HepG2 (cell line): ENCODE measurements at regions of chr5 and their contacts with region 1.

Region 1: GRCh38 chr5:142145106-142145900 is 36.7 kb downstream of the NDFIP1 start:
- DNase-seq: peak; percentile 44
- ATAC-seq: peak; percentile 92
- H3K4me3 ChIP-seq: no peak overlapping the region
- H3K27ac ChIP-seq: no peak overlapping the region
- H3K4me1 ChIP-seq: no peaks in the 10 kb centered on the region
- H3K27me3 ChIP-seq: no peaks in the 10 kb centered on the region
- CTCF ChIP-seq: peak; percentile 72
- EP300 ChIP-seq: no peak
- POLR2A ChIP-seq: no peak
- RAD21 ChIP-seq: 0 out of 2 replicates have a peak, but pooled peaks have one; percentile 34

Region 2: DNA sequence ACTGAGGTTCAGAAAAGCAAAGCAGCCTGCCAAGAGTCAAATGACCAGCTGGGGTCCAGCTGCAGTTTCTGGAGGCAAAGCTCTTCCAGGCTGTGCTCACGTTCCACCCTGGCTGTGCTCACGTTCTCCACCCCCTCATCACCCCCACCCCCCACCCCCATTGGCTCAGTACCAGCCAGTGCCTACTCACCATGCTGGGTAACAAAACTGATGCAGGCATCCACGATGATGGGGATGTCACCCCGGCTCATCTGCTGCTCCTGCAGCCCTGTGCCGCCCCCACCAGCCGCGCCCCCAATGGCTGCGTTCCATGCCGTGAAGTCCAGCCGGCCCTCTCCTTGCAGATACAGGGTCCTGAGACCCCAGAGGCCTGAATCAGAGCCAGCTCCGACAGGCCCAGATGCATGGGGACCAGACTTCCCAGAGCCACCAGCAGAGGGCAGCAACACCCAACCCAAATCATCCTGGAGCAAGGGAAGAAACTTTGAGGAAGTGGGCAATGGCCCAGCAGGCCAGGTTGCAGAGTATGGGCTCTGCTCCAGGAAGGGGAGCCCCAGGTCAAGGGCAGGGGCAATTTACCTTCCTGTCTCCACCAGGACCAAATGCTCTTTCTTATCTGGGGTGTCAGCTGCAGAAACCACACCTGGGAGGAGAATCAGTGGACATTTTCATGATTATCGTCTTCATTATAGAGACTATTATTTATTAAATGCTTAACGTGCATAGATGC is 480.4 kb before region 1 on chr5:
- CTCF ChIA-PET with region 1: no interaction called
- POLR2A ChIA-PET with region 1: no interaction called
- in situ Hi-C with region 1: no loop called
- intact Hi-C with region 1: loop called (anchors 10 kb)
- DNase-seq: peak; percentile 56
- ATAC-seq: peak; percentile 90
- H3K4me3 ChIP-seq: no peak overlapping the region
- H3K27ac ChIP-seq: no peak overlapping the region
- H3K4me1 ChIP-seq: 0 out of 2 replicates have a peak, but pooled peaks cover 4% of the 10 kb centered on the region
- H3K27me3 ChIP-seq: no peaks in the 10 kb centered on the region; a peak in 1 of 5 replicates
- CTCF ChIP-seq: peak; percentile 93
- EP300 ChIP-seq: no peak
- POLR2A ChIP-seq: no peak
- RAD21 ChIP-seq: peak; percentile 68

Region 3: DNA sequence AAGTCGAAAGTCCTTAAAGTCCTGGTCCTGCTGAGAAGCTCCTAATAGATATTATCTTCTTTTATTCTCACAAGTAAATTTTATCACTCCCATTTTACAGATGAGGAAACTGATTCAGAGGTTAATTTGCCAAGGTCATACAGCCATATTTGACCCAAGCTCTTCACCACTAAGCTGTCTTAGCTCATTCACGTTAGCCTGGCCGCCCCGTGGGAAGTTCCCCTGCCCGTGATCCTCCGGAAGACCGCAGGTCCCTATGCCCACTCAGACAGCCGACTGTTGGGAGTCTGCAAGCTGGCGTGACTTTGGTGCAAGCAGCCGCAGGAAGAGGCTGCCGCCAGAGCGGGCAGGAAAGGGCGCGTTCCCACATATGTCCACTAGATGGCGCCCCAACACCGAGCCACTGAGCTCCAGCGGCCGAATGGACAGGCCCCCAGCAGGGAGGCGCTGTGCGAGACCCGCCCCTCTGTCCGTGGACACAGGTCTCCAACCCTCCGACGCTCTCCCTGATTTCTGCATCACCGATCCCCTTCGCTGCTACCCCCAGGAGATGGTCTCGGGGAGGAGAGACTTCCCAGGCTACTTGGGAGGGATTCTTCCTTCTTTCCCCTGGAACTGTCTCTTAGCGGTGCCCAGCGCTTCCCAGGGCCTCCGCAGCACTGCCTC is 453.3 kb before region 1 on chr5:
- CTCF ChIA-PET with region 1: no interaction called
- POLR2A ChIA-PET with region 1: no interaction called
- in situ Hi-C with region 1: loop called (anchors 25 kb)
- intact Hi-C with region 1: no loop called
- DNase-seq: peak; percentile 52
- ATAC-seq: peak; percentile 95
- H3K4me3 ChIP-seq: peak overlapping the region in 1 of 3 experiments; percentile 52; a peak in 1 of 6 replicates
- H3K27ac ChIP-seq: no peak overlapping the region
- H3K4me1 ChIP-seq: no peaks in the 10 kb centered on the region
- H3K27me3 ChIP-seq: peaks cover 11 to 48% of the 10 kb centered on the region in 2 experiments
- CTCF ChIP-seq: peak; percentile 99
- EP300 ChIP-seq: no peak
- POLR2A ChIP-seq: no peak
- RAD21 ChIP-seq: peak; percentile 98

Region 4: DNA sequence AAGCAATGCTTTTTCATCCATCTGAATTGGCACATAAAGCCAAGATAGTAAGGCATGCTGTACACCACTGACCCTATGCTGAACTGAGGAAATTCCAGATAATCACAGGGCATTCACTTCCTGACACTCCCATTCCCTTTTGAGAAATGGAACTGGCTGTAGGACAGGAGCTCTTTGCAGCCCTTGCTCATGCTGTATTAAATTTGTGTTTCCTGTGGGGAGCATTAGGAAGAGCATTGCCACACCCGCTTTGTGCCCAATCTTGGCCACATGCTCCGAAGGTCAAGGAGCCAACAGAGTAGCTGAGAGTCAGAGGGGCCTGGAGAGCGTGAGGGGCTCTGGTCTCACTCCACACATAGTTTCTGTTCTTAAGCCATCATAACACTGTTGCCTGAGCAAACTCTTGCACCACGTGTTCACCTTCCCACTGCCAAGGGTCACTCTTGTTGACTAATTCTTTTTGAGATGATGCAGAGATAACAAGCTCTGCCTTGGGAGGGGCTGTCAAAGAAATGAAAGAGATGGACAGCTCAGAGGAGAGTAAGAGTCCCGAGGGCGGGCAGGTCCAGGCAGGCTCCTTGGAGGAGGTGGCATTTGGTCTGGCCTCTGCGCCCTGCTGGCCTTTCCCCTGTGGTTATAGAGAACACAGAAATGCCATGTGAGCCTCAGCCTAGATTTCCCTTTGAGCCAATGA is 431.5 kb before region 1 on chr5:
- CTCF ChIA-PET with region 1: no interaction called
- POLR2A ChIA-PET with region 1: no interaction called
- in situ Hi-C with region 1: no loop called
- intact Hi-C with region 1: no loop called
- DNase-seq: peak; percentile 9
- ATAC-seq: peak; percentile 65
- H3K4me3 ChIP-seq: no peak overlapping the region
- H3K27ac ChIP-seq: no peak overlapping the region
- H3K4me1 ChIP-seq: peaks cover 10% of the 10 kb centered on the region
- H3K27me3 ChIP-seq: no peaks in the 10 kb centered on the region
- CTCF ChIP-seq: no peak
- EP300 ChIP-seq: no peak
- POLR2A ChIP-seq: no peak
- RAD21 ChIP-seq: no peak

Region 5: DNA sequence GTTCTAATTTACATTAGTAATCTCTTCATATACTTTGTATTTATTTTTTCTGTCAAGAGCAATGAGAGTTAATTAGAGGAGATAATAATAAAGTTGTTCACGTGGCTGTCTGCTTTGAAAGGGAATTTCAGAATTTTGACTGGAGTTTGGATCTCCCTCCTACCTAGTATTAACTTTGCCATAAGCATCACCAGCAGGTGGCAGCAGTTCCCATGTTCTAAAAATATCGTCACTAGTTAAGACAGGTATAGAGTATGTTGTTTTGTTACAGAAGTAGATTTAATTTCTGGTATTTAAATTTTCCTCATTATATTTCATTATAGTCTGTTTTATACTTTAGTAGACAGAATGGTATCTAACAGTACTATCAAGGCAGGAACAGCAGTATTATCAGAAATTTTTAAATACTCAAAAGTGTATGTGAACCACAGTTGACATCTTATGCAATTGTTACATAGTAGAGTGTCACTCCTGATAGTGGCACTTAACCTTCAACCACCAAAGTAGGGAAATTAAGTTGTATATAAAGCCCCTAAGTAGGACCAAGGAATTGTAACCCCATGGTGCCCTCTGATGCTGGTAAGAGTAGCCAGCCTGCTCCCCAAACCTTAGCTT is 152.8 kb before region 1 on chr5:
- CTCF ChIA-PET with region 1: interaction called, 33 read pairs
- POLR2A ChIA-PET with region 1: no interaction called
- in situ Hi-C with region 1: loop called (anchors 5 kb)
- intact Hi-C with region 1: loop called (anchors 1 kb)
- DNase-seq: peak; percentile 55
- ATAC-seq: peak; percentile 78
- H3K4me3 ChIP-seq: no peak overlapping the region
- H3K27ac ChIP-seq: no peak overlapping the region
- H3K4me1 ChIP-seq: peaks cover 4% of the 10 kb centered on the region
- H3K27me3 ChIP-seq: no peaks in the 10 kb centered on the region
- CTCF ChIP-seq: peak; percentile 74
- EP300 ChIP-seq: no peak
- POLR2A ChIP-seq: no peak
- RAD21 ChIP-seq: peak; percentile 48; the same call in 1 of the 2 replicates